Heart right ventricle (tissue), 16 donors: ENCODE measurements at regions of chr11 and their contacts with region 1.

Region 1: GRCh38 chr11:100681064-100681502 is 6.0 kb upstream of the ARHGAP42 start:
- DNase-seq: peak; percentile 33 to 37
- ATAC-seq: peak in 7 of 8 donors; percentile 41 to 78 (median 57)
- H3K4me3 ChIP-seq: no peak overlapping the region
- H3K27ac ChIP-seq: peak overlapping the region in 1 of 10 donors; percentile 3
- H3K4me1 ChIP-seq: peaks cover 0 to 35% (median 10%) of the 10 kb centered on the region in 9 donors
- H3K27me3 ChIP-seq: no peaks in the 10 kb centered on the region
- CTCF ChIP-seq: no peak

Region 2: DNA sequence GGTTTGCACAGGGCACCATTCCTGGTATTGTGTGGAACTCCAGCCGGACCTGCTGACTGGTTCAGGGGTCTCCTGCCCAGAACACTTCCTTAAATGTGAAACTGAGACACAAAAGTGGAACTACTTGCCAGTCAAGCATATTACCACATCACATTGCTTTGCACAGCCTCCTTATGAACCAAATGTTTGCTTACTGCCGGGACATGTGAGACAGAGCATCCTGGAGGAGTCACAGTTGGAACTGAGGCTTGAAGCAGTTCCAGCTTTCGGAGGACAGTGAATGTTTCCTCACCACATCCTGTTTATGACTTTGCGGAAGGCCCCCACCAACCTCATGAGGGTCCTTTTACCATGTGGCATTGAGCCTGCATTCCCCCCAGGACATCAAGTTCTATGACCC is 99.8 kb before region 1 on chr11:
- intact Hi-C with region 1: loop called in 8 of 10 experiments (anchors 5 to 10 kb)
- DNase-seq: no peak
- ATAC-seq: no peak
- H3K4me3 ChIP-seq: no peak overlapping the region
- H3K27ac ChIP-seq: no peak overlapping the region
- H3K4me1 ChIP-seq: peaks cover 0 to 32% (median 13%) of the 10 kb centered on the region in 9 donors
- H3K27me3 ChIP-seq: no peaks in the 10 kb centered on the region
- CTCF ChIP-seq: no peak

Region 3: DNA sequence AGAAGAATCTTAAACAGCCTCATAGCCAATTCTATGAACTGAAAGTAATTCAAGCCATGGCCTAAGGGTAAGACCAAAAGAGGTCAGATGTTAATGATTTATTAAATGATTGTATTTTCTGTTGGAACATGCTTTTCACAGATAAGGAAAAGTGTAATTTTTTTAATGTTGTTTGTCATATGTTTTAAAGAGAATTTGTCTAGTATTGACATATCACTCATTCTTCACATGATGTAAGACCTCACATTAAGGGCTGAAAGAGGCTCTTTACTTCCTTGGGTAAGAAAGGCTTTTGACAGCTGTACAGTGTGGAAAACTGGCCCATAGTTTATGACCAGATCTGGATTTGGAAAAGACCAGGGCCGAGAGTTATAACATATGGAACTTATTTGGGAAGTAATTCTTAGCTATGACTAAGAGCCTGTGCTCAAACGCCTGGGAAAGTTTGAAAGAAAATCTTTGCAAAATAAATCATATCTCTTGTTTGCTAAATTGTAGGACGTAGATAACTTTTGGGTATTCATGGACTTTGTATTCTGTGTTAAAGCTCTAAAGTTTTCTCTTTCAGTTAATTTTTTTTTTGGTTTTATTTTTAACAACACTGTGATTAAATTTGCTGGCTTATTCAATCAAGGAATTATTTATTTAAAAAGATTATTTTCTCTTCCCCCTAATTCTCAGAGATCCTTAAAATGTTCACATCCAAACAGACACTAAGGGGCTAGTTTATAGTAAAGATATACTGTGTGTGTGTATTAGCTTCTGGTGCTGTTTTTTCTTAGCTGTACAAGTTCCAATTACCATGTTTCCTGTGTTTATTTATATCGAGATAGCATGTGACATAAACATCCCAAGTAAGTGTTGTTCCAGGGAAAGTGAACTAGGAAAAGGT is 168.2 kb after region 1 on chr11:
- intact Hi-C with region 1: loop called in 4 of 10 experiments (anchors 2 to 5 kb)
- DNase-seq: no peak
- ATAC-seq: peak in 7 of 8 donors; percentile 60 to 75 (median 70)
- H3K4me3 ChIP-seq: no peak overlapping the region
- H3K27ac ChIP-seq: peak overlapping the region in 8 of 10 donors; percentile 22 to 72 (median 48)
- H3K4me1 ChIP-seq: peaks cover 0 to 36% (median 18%) of the 10 kb centered on the region in 9 donors
- H3K27me3 ChIP-seq: no peaks in the 10 kb centered on the region
- CTCF ChIP-seq: no peak

Region 4: GRCh38 chr11:100855466-100856067 is 174.5 kb after region 1 on chr11:
- intact Hi-C with region 1: loop called in 9 of 10 experiments (anchors 1 to 5 kb)
- DNase-seq: no peak
- ATAC-seq: peak in 2 of 8 donors; percentile 50 to 54
- H3K4me3 ChIP-seq: no peak overlapping the region
- H3K27ac ChIP-seq: no peak overlapping the region
- H3K4me1 ChIP-seq: peaks cover 0 to 13% (median 0%) of the 10 kb centered on the region in 9 donors
- H3K27me3 ChIP-seq: no peaks in the 10 kb centered on the region
- CTCF ChIP-seq: peak; percentile 59 to 81 (median 71)

Region 5: DNA sequence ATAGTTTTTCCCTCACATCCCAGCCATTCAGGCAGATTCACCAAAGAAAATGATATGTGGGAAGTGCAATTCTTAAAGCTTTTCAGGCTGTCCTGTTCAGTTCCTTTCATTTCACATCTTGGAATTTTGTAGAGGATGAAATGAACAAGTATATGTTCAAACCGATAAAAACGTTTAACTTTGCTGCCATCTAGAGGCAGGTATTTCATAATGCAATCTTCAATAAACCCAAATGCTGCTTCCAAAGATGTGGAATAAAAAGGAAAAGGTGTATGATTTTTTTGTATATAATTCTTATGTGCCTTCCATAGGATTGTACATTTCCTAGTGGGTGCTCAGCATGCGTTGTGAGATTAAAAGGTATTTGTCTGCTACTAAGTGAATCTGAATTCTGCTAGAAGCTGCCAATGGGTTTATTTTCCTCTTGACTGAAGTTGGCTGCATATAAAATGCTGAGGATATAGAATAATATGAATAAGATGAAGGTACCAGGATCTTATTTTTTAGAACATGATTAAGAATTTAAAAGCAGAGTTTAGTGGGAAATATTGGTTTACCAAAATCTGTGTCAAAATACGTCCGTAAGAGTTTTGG is 249.2 kb after region 1 on chr11:
- intact Hi-C with region 1: loop called in 8 of 10 experiments (anchors 2 to 10 kb)
- DNase-seq: peak in 1 of 2 donors; percentile 11
- ATAC-seq: peak in 4 of 8 donors; percentile 34 to 67 (median 62)
- H3K4me3 ChIP-seq: no peak overlapping the region
- H3K27ac ChIP-seq: no peak overlapping the region
- H3K4me1 ChIP-seq: peaks cover 0 to 17% (median 0%) of the 10 kb centered on the region in 9 donors
- H3K27me3 ChIP-seq: no peaks in the 10 kb centered on the region
- CTCF ChIP-seq: peak; percentile 42 to 76 (median 68)